CD4-positive, alpha-beta memory T cell (primary cell): ENCODE measurements at regions of chr17 and their contacts with region 1.

Region 1: DNA sequence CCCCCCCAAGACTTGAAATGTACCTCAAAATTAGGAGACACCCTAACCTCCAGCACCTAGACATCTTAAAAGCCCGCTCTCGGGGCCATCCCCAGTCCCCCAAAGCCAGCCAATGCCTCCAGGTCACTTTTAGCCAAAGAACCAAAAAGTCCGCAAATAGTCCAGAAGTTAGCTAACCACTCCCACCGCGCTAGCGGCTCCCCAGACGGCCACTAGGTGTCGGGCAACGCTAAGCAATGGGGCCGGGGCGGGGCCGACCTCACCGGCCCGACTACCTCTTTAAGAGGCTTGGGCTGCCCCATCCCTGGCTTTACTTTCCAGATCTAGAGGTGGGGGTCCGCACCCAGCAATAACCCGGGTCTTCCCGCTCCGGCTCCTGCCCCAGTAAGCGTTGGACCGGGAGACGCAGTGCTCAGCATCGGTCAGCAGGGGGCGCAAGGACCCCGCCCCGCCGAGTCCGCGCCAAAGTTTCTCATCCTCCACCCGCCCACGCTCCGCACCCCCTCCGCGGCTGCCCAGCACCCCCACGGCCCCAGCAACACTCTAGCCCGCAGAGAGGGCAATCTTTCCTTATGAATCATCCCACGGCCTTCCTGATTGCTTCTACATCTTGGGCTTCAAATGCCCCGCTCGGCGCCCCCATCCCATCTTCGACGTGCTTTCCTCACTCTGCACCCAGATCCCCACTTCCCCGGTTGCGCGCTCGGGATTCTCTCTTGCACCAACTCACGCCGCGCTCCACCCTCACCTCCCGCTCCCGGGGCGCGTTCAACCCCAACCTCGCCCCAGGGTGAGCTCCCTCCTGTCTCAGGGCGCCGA is 765 bp downstream of the COL1A1 start:
- DNase-seq: peak; percentile 79 to 81 (median 80)
- H3K4me3 ChIP-seq: peak overlapping the region in 1 of 2 donors; percentile 50
- H3K4me3 Mint-ChIP-seq: peak overlapping the region; percentile 50 to 84 (median 75)
- H3K27ac ChIP-seq: peak overlapping the region; percentile 6
- H3K27ac Mint-ChIP-seq: peak overlapping the region; percentile 80 to 95 (median 91)
- H3K4me1 ChIP-seq: peaks cover 16% of the 10 kb centered on the region
- H3K4me1 Mint-ChIP-seq: peaks cover 8 to 39% (median 18%) of the 10 kb centered on the region in 4 donors
- H3K27me3 ChIP-seq: peaks cover 17% of the 10 kb centered on the region
- H3K27me3 Mint-ChIP-seq: peaks cover 33 to 60% of the 10 kb centered on the region in 2 donors

Region 2: DNA sequence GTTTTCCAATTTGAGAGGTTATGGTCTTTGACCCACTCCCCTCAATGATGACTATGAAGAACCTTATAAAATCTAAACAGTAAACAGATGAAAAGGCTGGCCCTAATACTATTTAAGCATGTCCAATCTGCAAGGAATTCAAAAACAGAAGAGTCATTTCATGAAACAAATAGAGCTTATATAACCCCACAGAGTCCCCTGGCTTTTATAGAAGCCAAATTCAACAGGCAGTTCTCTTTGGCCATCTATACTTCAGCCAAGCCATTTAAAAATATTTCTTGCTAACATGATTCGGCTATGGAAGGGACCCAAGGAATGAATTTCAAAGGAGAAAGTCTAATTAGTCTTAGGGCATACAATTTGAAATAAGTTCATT is 566.2 kb before region 1 on chr17:
- CTCF ChIA-PET with region 1: no interaction called
- POLR2A ChIA-PET with region 1: no interaction called
- intact Hi-C with region 1: no loop called
- DNase-seq: no peak
- H3K4me3 ChIP-seq: no peak overlapping the region
- H3K4me3 Mint-ChIP-seq: no peak overlapping the region
- H3K27ac ChIP-seq: no peak overlapping the region
- H3K27ac Mint-ChIP-seq: peak overlapping the region in 2 of 7 donors; percentile 26 to 34
- H3K4me1 ChIP-seq: peaks cover 11% of the 10 kb centered on the region
- H3K4me1 Mint-ChIP-seq: peaks cover 20 to 35% (median 33%) of the 10 kb centered on the region in 4 donors
- H3K27me3 ChIP-seq: no peaks in the 10 kb centered on the region
- H3K27me3 Mint-ChIP-seq: no peaks in the 10 kb centered on the region

Region 3: DNA sequence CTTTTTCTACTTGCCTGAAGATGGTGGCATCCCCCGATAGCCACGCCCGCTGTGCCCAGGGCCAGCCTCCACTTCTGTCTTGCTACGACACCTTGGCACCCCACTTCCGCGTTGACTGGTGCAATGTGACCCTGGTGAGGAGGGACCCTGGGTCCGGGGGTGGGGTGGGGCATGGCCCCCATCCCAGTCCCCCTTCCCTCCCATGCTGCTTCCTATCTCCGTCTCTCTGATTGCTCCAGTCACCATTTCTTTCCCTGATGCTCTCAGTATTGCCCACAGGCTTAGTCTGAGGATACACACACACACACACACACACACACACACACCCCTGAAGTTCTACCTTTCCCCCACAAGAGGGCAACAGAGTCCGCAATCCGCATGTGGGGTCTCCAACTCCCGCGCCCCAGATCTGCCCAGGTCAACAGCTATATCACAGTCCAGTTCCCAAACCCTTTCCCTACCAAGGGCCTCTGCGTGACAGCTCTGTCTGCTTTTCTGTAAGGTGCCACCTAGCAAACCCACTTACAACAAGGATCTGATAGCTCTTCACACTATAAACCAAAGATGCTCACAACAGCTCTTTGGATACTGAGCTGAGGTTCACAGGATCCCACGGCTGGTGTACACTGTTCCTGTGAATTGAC is 31.4 kb before region 1 on chr17:
- CTCF ChIA-PET with region 1: interaction called, 8 read pairs
- POLR2A ChIA-PET with region 1: no interaction called
- intact Hi-C with region 1: loop called (anchors 1 kb)
- DNase-seq: peak; percentile 71 to 81 (median 72)
- H3K4me3 ChIP-seq: peak overlapping the region in 1 of 2 donors; percentile 35
- H3K4me3 Mint-ChIP-seq: peak overlapping the region; percentile 25 to 87 (median 65)
- H3K27ac ChIP-seq: no peak overlapping the region
- H3K27ac Mint-ChIP-seq: peak overlapping the region; percentile 37 to 89 (median 81)
- H3K4me1 ChIP-seq: peaks cover 10% of the 10 kb centered on the region
- H3K4me1 Mint-ChIP-seq: peaks cover 10 to 19% (median 11%) of the 10 kb centered on the region in 4 donors
- H3K27me3 ChIP-seq: no peaks in the 10 kb centered on the region
- H3K27me3 Mint-ChIP-seq: peaks cover 2 to 3% of the 10 kb centered on the region in 2 donors

Region 4: DNA sequence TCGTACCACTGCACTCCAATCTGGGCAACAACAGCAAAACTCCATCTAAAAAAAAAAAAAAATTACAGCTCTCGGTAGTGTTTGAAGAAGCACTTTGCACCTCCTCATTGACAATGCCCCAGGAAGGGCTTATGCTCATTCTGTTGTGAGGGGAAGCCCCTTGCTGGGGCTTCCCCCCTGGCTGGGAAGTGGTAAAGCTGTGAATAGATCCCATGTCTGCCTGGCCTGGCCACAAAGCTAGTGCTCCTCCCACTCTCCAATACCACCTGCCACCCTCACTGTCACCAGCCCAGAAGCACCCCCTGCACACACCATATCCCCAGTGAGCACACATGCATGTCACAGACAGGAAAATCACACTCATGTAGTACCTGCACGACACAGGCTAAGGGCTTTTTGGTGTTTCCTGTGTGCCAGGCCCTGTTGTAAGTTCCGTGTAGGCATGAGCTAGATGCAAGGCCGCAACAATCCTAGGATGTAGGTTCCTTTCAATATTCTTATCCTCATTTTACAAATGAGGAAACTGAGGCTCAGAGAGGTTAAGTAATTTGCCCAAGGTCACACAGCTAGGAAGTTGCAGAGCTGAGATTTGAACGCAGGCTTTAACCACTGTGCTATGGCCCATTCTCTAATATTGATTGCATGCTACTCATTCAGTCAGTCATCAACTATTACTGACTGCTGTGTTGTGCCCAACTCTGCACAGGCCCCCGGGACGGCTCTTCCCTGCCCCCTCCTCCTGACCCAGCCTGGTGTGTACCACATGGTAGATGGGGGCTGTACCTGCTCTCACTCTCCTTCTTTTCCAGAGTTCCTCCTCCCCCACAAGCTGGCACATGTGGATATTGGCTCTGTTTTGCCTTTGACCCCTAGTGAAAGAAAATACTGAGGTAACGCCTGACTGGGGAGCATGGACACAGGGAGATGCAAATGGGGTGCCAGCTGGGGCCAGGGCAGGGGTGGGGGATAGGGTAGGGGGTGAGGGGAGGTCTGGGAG is 12.7 kb after region 1 on chr17:
- CTCF ChIA-PET with region 1: interaction called, 31 read pairs
- POLR2A ChIA-PET with region 1: interaction called, 3 read pairs
- intact Hi-C with region 1: no loop called
- DNase-seq: peak; percentile 17 to 92 (median 35)
- H3K4me3 ChIP-seq: no peak overlapping the region
- H3K4me3 Mint-ChIP-seq: peak overlapping the region in 1 of 8 donors; percentile 3
- H3K27ac ChIP-seq: no peak overlapping the region
- H3K27ac Mint-ChIP-seq: peak overlapping the region in 3 of 7 donors; percentile 5 to 29 (median 22)
- H3K4me1 ChIP-seq: peaks cover 6% of the 10 kb centered on the region
- H3K4me1 Mint-ChIP-seq: peaks cover 0 to 22% (median 3%) of the 10 kb centered on the region in 4 donors
- H3K27me3 ChIP-seq: no peaks in the 10 kb centered on the region
- H3K27me3 Mint-ChIP-seq: peaks cover 13 to 25% of the 10 kb centered on the region in 2 donors

Region 5: DNA sequence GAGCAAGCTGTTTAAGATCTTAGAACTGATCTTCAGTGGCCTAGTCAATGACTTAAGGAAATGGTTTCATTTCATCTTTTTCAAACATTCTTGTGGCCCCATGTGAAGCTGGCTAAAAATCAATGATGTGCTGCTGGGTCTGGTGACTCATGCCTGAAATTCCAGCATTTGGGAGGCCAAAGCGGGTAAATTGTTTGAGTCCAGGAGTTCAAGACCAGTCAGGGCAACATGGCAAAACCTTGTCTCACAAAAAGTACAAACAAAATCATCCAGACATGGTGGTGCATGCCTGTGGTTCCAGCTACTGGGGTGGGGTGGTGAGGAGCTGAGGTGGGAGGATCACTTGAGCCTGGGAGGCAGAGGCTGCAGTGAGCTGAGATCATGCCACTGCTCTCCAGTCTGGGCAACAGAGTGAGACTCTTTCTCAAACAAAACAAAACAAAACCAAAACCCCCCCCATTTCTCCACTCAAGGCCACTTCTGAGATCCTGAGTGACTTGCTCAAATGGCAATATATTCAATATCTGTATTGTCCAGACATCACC is 18.2 kb after region 1 on chr17:
- CTCF ChIA-PET with region 1: interaction called, 31 read pairs
- POLR2A ChIA-PET with region 1: interaction called, 3 read pairs
- intact Hi-C with region 1: no loop called
- DNase-seq: no peak
- H3K4me3 ChIP-seq: no peak overlapping the region
- H3K4me3 Mint-ChIP-seq: no peak overlapping the region
- H3K27ac ChIP-seq: no peak overlapping the region
- H3K27ac Mint-ChIP-seq: no peak overlapping the region
- H3K4me1 ChIP-seq: no peaks in the 10 kb centered on the region
- H3K4me1 Mint-ChIP-seq: peaks cover 0 to 9% (median 0%) of the 10 kb centered on the region in 4 donors
- H3K27me3 ChIP-seq: no peaks in the 10 kb centered on the region
- H3K27me3 Mint-ChIP-seq: peaks cover 4 to 10% of the 10 kb centered on the region in 2 donors

Region 6: DNA sequence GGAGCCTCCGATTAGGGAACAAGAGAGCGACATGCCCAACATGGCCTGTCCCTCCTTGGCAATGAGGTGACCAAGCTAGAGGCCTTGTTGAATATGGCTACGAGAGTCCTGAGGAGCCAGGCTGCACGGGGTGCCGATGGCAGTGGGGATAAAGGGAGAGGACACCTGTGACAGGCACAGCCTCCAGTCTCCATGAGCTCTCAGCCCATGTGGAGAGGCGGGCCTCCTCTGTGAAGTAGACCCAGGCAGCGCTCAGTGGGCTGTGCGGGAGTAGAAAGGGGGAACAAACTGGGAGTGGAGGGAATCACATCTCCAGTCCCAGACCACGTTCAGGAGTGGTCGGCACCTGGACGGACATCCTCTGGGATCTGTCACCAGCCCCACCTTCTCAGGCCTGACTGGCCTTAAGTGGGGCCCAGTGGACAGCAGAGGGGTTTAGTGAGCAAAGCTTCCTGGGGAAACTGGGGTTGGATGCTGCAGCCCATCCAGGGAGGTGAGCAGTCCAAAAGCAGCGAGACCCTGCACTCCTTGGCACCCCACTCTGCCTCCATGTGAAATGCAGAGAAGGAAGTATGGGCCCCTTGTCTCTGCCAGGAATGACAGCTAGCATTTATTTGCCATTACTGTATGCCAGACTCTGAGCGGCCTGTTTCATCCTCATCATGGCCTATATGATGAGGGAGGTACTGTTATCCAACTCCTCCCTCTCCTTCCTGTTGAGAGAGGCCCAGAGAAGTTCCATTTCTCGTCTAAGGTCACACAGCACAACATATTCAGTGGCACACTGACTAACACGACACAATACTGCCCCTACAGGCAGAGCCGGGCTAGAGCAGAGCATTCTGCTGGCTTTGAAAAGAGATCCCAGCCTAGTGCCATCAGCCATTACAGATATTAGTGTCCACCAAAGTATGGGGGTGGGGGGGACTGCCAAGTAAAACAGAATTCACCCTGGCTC is 69.1 kb after region 1 on chr17:
- CTCF ChIA-PET with region 1: interaction called, 90 read pairs
- POLR2A ChIA-PET with region 1: no interaction called
- intact Hi-C with region 1: loop called (anchors 1 kb)
- DNase-seq: peak; percentile 33 to 53 (median 42)
- H3K4me3 ChIP-seq: no peak overlapping the region
- H3K4me3 Mint-ChIP-seq: no peak overlapping the region
- H3K27ac ChIP-seq: no peak overlapping the region
- H3K27ac Mint-ChIP-seq: no peak overlapping the region
- H3K4me1 ChIP-seq: peaks cover 4% of the 10 kb centered on the region
- H3K4me1 Mint-ChIP-seq: peaks cover 6 to 8% (median 7%) of the 10 kb centered on the region in 4 donors
- H3K27me3 ChIP-seq: peaks cover 4% of the 10 kb centered on the region
- H3K27me3 Mint-ChIP-seq: peaks cover 6 to 11% of the 10 kb centered on the region in 2 donors

Region 7: DNA sequence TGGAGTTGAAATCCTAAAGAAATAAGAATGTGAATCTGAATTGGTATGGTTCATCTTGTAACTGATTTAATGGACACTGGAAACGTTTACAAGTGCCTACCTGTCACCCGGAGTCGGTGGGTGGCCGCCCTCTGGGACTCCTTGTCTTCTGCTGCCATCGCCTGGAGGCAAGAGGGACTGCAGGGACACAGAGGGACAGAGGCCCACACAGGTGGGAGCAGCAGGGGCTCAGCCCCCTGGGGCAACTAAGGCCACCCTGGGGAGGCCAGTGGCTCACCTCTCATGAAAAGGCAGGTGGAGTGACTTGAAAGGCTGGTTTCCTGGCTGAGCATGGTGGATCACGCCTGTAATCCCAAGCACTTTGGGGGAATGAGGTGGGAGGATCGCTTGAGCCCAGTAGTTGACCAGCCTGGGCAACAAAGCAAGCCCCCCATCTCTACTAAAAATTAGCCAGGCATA is 96.8 kb after region 1 on chr17:
- CTCF ChIA-PET with region 1: interaction called, 107 read pairs
- POLR2A ChIA-PET with region 1: interaction called, 3 read pairs
- intact Hi-C with region 1: loop called (anchors 1 kb)
- DNase-seq: peak; percentile 73 to 81 (median 75)
- H3K4me3 ChIP-seq: no peak overlapping the region
- H3K4me3 Mint-ChIP-seq: no peak overlapping the region
- H3K27ac ChIP-seq: no peak overlapping the region
- H3K27ac Mint-ChIP-seq: peak overlapping the region in 1 of 7 donors; percentile 47
- H3K4me1 ChIP-seq: no peaks in the 10 kb centered on the region
- H3K4me1 Mint-ChIP-seq: no peaks in the 10 kb centered on the region
- H3K27me3 ChIP-seq: no peaks in the 10 kb centered on the region
- H3K27me3 Mint-ChIP-seq: peaks cover 0 to 4% of the 10 kb centered on the region in 2 donors